HEK293T (cell line): ENCODE measurements at regions of chr3 and their contacts with region 1.

Region 1: DNA sequence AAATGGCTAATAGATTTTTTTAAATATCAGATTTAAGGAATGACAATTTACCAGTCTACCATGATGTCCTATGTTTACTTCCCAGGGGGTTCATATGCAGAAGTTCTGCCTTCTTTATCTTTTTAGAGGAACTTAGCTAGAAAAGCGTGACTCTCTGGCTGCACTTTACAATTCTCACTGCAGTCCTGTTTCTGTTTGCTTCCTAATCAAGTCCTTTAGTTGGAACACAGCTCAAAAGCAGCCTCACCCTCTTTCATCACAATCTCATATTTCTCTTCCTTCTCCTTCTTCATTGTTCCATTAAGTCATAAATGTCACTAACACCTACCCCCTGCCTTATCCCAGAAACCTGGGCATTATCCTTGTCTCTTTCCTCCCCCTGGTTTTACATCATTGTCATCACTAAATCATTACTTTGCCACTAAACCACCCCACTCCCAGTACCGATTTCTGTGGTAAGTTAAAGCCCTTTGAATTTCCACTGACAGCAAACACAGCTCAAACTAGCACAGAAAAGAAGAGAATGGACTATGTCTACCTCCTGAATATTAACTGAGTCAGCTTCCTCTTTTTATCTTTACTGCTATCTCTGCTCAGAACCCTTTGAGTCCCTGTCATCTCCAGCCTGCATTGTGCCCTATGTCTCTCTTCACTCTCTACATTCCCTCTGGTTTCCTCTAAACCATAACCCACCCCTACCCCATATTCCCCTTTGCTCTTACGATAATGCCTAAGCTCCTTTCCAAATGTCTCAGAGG is 13.8 kb upstream of the PPP4R2 start:
- DNase-seq: no peak

Region 2: GRCh38 chr3:72872183-72872582 is 110.6 kb before region 1 on chr3:
- CTCF ChIA-PET with region 1: no interaction called
- POLR2A ChIA-PET with region 1: no interaction called
- DNase-seq: no peak

Region 3: GRCh38 chr3:72996473-72997333 is 13.9 kb after region 1 on chr3 and contains the start of gene PPP4R2:
- CTCF ChIA-PET with region 1: no interaction called
- POLR2A ChIA-PET with region 1: interaction called, 10 read pairs
- DNase-seq: peak; percentile 85

Region 4: DNA sequence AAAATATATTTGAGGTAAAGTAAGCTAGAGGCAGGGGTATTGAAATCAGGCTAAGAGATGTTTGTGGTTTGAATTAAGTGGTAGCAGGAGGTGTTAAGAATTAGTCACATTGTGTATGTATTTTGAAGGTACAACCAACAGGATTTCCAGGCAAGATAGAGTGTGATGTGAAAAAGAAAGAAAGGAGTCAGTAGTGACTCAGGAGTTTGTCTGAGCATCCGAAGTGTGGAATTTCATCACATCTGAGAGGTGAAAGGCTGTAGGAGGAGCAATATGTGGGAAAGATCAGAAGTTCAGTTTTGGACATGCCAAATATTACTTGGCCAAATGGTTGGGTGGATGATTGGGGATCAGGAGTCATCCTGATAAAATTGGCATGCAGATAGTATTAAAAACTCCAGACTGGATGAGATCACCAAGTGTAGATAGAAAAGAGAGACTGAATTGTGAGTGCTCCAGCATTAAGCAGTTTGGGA is 46.6 kb after region 1 on chr3:
- CTCF ChIA-PET with region 1: no interaction called
- POLR2A ChIA-PET with region 1: no interaction called
- DNase-seq: no peak

Region 5: DNA sequence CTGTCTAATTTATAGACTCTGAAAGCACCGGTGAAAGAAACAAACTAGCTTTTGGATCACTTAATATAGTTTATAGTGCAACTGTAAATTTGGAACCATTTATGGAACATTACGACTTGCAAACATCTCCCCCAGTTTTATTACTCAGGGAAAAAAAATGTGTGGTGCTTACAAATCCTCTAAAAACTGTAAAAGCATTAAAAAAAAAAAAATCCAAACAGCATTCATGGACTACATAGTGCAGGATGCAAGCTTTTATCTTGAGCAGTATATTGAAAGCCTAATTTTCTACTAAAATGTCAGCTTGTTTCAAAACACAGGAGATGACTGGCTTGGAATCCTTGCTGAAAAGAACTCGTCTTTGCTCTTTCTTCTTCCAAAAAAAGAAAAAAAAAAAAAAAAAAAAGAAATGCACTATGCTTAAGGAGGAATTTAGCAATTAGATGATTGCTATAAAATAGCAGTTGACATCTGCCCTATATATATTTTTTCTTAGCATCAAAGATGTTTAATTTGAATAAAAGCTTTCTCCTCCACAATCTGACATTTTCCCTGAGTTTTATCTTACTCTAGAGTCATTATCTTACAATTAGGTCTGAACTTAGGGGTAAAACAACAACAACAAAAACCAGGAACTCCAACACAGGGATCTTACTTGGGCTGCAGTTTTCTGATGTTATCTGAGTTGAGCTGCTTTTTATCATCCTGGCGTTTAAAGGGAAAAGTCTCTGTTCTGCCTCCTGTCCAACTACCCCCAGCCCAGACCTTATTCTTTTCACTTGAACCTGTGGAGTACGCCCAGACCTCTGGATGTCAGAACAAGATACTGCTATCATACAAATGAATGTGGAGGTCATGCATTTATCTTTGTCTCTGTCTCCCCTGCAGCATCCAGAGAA is 704.6 kb after region 1 on chr3:
- CTCF ChIA-PET with region 1: no interaction called
- POLR2A ChIA-PET with region 1: no interaction called
- DNase-seq: no peak